ENCODE measurements at regions of chr11 and their contacts with region 1.

Region 1: DNA sequence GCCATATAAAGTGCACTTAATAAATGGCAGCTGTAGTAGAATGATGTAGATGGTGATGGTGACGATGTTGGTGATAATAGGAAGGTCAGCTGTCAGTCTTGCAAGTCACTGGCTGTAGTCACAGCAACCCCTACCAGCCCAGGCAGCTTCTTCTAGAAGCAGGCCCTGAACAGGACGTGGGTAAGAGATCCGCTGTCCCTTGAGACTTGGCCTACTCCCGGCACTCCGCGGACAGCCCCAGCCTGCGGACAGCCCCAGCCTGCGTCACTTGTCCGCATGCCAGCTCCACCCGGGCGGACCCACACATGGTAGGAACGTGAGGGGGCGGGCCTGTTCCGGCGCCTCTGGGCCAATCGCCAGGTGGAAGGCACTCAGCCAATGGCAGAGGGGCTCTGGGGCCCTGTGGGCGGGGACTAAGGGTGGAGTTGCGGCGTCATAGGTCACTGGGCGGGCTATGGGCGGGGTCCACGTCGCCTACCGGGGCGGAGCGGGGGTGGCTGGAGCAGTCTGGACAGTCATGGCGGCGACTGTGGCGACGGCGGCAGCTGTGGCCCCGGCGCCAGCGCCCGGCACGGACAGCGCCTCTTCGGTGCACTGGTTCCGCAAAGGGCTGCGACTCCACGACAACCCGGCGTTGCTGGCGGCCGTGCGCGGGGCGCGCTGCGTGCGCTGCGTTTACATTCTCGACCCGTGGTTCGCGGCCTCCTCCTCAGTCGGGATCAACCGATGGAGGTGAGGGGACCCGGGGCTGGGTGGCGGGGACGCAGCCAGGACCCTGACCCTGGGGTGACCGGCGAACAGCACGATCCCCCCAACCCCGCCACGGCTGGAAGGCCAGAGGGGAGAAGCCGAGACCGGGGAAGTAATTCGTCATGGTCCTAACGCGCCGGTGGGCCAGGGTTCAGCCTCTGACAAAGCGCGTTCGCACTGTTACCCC is at the start of gene CRY2:
- DNase-seq: peak; percentile 98 to 99 (median 98)
- ATAC-seq: peak; percentile 86
- H3K4me3 ChIP-seq: peak within 1 kb of the TSS; percentile 81 to 96
- H3K4me3 Mint-ChIP-seq: peak within 1 kb of the TSS; percentile 82
- H3K27ac ChIP-seq: peak within 1 kb of the TSS; percentile 88 to 96
- H3K27ac Mint-ChIP-seq: peak within 1 kb of the TSS; percentile 95
- H3K4me1 ChIP-seq: peaks cover 36% of the 10 kb centered on the region
- H3K4me1 Mint-ChIP-seq: peaks cover 56% of the 10 kb centered on the region
- H3K27me3 ChIP-seq: no peaks in the 10 kb centered on the region
- H3K27me3 Mint-ChIP-seq: no peaks in the 10 kb centered on the region
- CTCF ChIP-seq: no peak
- total RNA-seq, gene CRY2: 172 to 177 TPM

Region 2: GRCh38 chr11:45771566-45772448 is 75.4 kb before region 1 on chr11:
- CTCF ChIA-PET with region 1: interaction called, 7 read pairs
- POLR2A ChIA-PET with region 1: no interaction called
- intact Hi-C with region 1: loop called (anchors 1 kb)
- DNase-seq: peak; percentile 55 to 88 (median 81)
- ATAC-seq: peak; percentile 84
- H3K4me3 ChIP-seq: peak overlapping the region; percentile 51 to 81
- H3K4me3 Mint-ChIP-seq: peak overlapping the region; percentile 91
- H3K27ac ChIP-seq: peak overlapping the region in 1 of 2 experiments; percentile 75
- H3K27ac Mint-ChIP-seq: peak overlapping the region; percentile 74
- H3K4me1 ChIP-seq: peaks cover 6% of the 10 kb centered on the region
- H3K4me1 Mint-ChIP-seq: peaks cover 16% of the 10 kb centered on the region
- H3K27me3 ChIP-seq: no peaks in the 10 kb centered on the region
- H3K27me3 Mint-ChIP-seq: peaks cover 4% of the 10 kb centered on the region
- CTCF ChIP-seq: peak; percentile 67

Region 3: DNA sequence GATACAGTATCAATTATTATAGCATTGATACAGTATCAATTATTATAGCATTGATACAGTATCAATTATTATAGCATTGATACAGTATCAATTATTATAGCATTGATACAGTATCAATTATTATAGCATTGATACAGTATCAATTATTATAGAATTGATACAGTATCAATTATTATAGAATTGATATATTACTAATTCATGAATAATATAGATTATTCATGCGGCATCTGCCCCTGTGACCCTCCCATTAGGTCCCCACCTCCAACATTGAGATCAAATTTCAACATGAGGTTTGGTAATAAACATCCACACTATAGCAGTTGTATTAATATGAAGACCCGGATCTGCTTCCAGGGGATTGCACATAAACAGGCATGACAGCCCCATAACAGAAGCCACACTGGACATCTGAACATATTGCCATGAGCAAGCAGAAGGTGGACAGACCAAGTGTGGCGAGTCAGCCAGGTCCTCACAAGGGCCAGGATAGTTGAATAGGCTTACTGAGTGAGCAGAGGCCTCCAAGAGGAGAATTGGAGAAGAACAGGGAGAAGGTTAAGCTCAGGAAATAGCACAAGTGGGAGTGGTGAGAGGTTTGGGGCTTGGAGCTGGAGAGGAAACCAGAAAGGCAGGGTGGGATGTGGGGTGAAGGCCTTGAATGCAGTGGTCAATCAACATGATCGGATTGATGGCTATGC is 31.6 kb before region 1 on chr11:
- CTCF ChIA-PET with region 1: interaction called, 11 read pairs
- POLR2A ChIA-PET with region 1: no interaction called
- intact Hi-C with region 1: no loop called
- DNase-seq: no peak
- ATAC-seq: no peak
- H3K4me3 ChIP-seq: no peak overlapping the region
- H3K4me3 Mint-ChIP-seq: no peak overlapping the region
- H3K27ac ChIP-seq: no peak overlapping the region
- H3K27ac Mint-ChIP-seq: no peak overlapping the region
- H3K4me1 ChIP-seq: no peaks in the 10 kb centered on the region
- H3K4me1 Mint-ChIP-seq: peaks cover under 1% of the 10 kb centered on the region
- H3K27me3 ChIP-seq: no peaks in the 10 kb centered on the region
- H3K27me3 Mint-ChIP-seq: peaks cover 3% of the 10 kb centered on the region
- CTCF ChIP-seq: no peak

Region 4: DNA sequence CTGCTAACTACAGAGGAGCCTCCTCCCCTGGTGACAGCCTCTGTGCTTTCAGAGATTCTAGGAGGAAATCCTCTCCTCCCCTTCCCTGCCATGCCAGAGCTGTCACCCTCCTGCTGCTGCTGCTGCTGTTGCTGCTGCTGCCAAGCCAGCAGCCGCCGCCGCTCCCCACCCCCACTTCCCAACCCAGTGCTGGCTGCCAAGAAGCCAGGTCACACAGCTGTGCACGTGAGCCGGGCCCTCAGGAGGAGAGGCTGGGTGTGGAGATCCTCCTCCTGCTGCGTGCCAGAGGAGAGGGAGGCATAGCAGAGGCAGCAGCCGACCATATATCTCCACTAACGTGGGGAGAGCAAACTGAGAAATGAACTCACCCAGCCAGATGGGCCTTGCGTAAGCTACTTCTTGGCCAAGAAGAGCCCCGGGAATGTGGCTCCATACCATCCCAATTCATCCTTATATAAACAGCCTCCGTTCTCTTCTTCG is 12.5 kb after region 1 on chr11:
- CTCF ChIA-PET with region 1: interaction called, 11 read pairs
- POLR2A ChIA-PET with region 1: interaction called, 3 read pairs
- intact Hi-C with region 1: no loop called
- DNase-seq: no peak
- ATAC-seq: no peak
- H3K4me3 ChIP-seq: no peak overlapping the region
- H3K4me3 Mint-ChIP-seq: no peak overlapping the region
- H3K27ac ChIP-seq: no peak overlapping the region
- H3K27ac Mint-ChIP-seq: no peak overlapping the region
- H3K4me1 ChIP-seq: no peaks in the 10 kb centered on the region
- H3K4me1 Mint-ChIP-seq: peaks cover 6% of the 10 kb centered on the region
- H3K27me3 ChIP-seq: no peaks in the 10 kb centered on the region
- H3K27me3 Mint-ChIP-seq: no peaks in the 10 kb centered on the region
- CTCF ChIP-seq: no peak

Region 5: GRCh38 chr11:46006418-46007070 is 159.3 kb after region 1 on chr11:
- CTCF ChIA-PET with region 1: interaction called, 12 read pairs
- POLR2A ChIA-PET with region 1: no interaction called
- intact Hi-C with region 1: loop called (anchors 1 to 2 kb)
- DNase-seq: peak in 3 of 9 experiments; percentile 21 to 77 (median 68)
- ATAC-seq: peak; percentile 78
- H3K4me3 ChIP-seq: no peak overlapping the region
- H3K4me3 Mint-ChIP-seq: no peak overlapping the region
- H3K27ac ChIP-seq: no peak overlapping the region
- H3K27ac Mint-ChIP-seq: no peak overlapping the region
- H3K4me1 ChIP-seq: no peaks in the 10 kb centered on the region
- H3K4me1 Mint-ChIP-seq: peaks cover 2% of the 10 kb centered on the region
- H3K27me3 ChIP-seq: no peaks in the 10 kb centered on the region
- H3K27me3 Mint-ChIP-seq: no peaks in the 10 kb centered on the region
- CTCF ChIP-seq: peak; percentile 81

Region 6: GRCh38 chr11:46026606-46027293 is 179.5 kb after region 1 on chr11:
- CTCF ChIA-PET with region 1: no interaction called
- POLR2A ChIA-PET with region 1: no interaction called
- intact Hi-C with region 1: no loop called
- DNase-seq: no peak
- ATAC-seq: no peak
- H3K4me3 ChIP-seq: no peak overlapping the region
- H3K4me3 Mint-ChIP-seq: no peak overlapping the region
- H3K27ac ChIP-seq: no peak overlapping the region
- H3K27ac Mint-ChIP-seq: no peak overlapping the region
- H3K4me1 ChIP-seq: no peaks in the 10 kb centered on the region
- H3K4me1 Mint-ChIP-seq: peaks cover 3% of the 10 kb centered on the region
- H3K27me3 ChIP-seq: no peaks in the 10 kb centered on the region
- H3K27me3 Mint-ChIP-seq: no peaks in the 10 kb centered on the region
- CTCF ChIP-seq: no peak

Region 7: GRCh38 chr11:46352063-46352841 is 505.0 kb after region 1 on chr11:
- CTCF ChIA-PET with region 1: no interaction called
- POLR2A ChIA-PET with region 1: interaction called, 3 read pairs
- intact Hi-C with region 1: loop called (anchors 1 to 5 kb)
- DNase-seq: peak; percentile 62 to 93 (median 85)
- ATAC-seq: peak; percentile 65
- H3K4me3 ChIP-seq: peak overlapping the region; percentile 41 to 66
- H3K4me3 Mint-ChIP-seq: peak overlapping the region; percentile 84
- H3K27ac ChIP-seq: peak overlapping the region; percentile 27 to 64
- H3K27ac Mint-ChIP-seq: peak overlapping the region; percentile 92
- H3K4me1 ChIP-seq: peaks cover 79% of the 10 kb centered on the region
- H3K4me1 Mint-ChIP-seq: peaks cover 77% of the 10 kb centered on the region
- H3K27me3 ChIP-seq: no peaks in the 10 kb centered on the region
- H3K27me3 Mint-ChIP-seq: no peaks in the 10 kb centered on the region
- CTCF ChIP-seq: peak; percentile 93

Measured in CD8-positive, alpha-beta T cell (primary cell).